Mucosa of descending colon (tissue), 3 donors: ENCODE measurements at regions of chr1 and their contacts with region 1.

Region 1: DNA sequence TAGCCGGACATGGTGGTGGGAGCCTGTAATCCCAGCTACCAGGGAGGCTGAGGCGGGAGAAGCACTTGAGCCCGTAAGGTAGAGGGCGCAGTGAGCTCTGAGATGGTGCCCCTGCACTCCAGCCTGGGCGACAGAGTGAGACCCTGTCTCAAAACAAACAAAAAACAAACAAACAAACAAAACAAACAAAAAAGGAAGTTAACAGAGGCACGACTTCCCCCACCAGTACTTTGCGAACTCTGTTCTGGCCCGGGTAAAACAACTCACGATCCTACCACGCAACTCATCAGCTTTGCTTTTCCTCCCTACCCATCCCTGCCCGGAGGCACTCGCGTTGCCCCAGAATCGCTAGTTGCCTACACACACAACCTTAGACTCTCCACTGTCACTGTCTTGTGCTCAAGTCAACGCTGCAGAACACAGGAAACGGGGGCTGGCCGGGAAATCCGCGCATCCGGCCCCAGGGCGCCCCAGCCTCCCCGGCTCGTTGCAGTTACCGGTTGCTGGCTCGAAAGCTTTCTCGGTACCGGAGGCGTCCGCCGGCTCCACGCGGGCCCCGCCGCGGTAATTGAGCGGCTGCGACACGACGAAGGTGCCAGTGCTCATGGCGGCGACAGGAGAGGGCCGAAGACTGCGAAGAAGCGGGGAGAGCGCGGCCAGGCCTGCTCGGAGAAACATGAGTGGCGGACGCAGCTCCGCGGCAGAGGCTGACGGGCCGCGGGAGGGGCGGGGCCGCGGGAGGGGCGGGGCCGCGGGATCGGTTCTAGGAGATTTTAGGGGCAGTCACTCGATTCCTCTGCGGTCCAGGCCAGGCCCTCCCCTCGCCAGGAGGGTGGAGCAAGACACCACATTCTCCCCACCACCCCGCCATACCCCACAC is at the start of gene ALDH9A1:
- DNase-seq: peak; percentile 90 to 93 (median 92)
- ATAC-seq: peak; percentile 97
- H3K4me3 ChIP-seq: peak within 1 kb of the TSS; percentile 63
- H3K4me1 ChIP-seq: peaks cover 10% of the 10 kb centered on the region
- CTCF ChIP-seq: no peak
- total RNA-seq, gene ALDH9A1: 32.6 to 53.1 (median 49.8) TPM

Region 2: GRCh38 chr1:165600793-165601192 is 97.3 kb before region 1 on chr1:
- intact Hi-C with region 1: loop called in 1 of 2 experiments (anchors 10 kb)
- DNase-seq: peak in 1 of 3 donors; percentile 7
- ATAC-seq: no peak
- H3K4me3 ChIP-seq: no peak overlapping the region
- H3K4me1 ChIP-seq: peaks cover 5% of the 10 kb centered on the region
- CTCF ChIP-seq: no peak